CD8-positive, alpha-beta T cell (primary cell): ENCODE measurements at regions of chr12 and their contacts with region 1.

Region 1: GRCh38 chr12:100311317-100311716 is 44.3 kb downstream of the SCYL2 start:
- DNase-seq: no peak
- ATAC-seq: no peak
- H3K4me3 ChIP-seq: no peak overlapping the region
- H3K4me3 Mint-ChIP-seq: no peak overlapping the region
- H3K27ac ChIP-seq: no peak overlapping the region
- H3K27ac Mint-ChIP-seq: no peak overlapping the region
- H3K4me1 ChIP-seq: no peaks in the 10 kb centered on the region
- H3K4me1 Mint-ChIP-seq: peaks cover 3% of the 10 kb centered on the region
- H3K27me3 ChIP-seq: no peaks in the 10 kb centered on the region
- H3K27me3 Mint-ChIP-seq: no peaks in the 10 kb centered on the region
- CTCF ChIP-seq: no peak

Region 2: GRCh38 chr12:100058482-100059029 is 252.8 kb before region 1 on chr12:
- CTCF ChIA-PET with region 1: no interaction called
- POLR2A ChIA-PET with region 1: no interaction called
- intact Hi-C with region 1: loop called in 1 of 2 experiments (anchors 10 kb)
- DNase-seq: no peak
- ATAC-seq: no peak
- H3K4me3 ChIP-seq: no peak overlapping the region
- H3K4me3 Mint-ChIP-seq: no peak overlapping the region
- H3K27ac ChIP-seq: no peak overlapping the region
- H3K27ac Mint-ChIP-seq: no peak overlapping the region
- H3K4me1 ChIP-seq: no peaks in the 10 kb centered on the region
- H3K4me1 Mint-ChIP-seq: no peaks in the 10 kb centered on the region
- H3K27me3 ChIP-seq: no peaks in the 10 kb centered on the region
- H3K27me3 Mint-ChIP-seq: no peaks in the 10 kb centered on the region
- CTCF ChIP-seq: no peak

Region 3: DNA sequence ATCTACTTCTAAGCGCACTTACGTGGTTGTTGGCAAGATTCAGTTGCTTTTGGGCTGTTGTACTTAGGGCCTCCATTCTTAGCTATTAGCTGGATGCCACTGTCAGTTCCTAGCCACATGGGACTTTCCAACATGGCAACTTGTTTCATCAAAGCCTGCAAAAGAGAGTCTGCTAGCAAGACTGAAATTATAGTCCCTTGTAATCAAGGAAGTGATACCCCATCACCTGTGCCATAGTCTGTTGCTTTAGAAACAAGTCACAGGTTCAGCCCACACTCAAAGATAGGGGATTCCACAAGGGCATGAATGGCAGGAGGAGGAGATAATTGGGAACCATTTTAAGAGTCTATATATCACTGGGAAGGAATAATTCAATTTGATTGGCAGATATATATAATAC is 18.5 kb after region 1 on chr12:
- CTCF ChIA-PET with region 1: no interaction called
- POLR2A ChIA-PET with region 1: no interaction called
- intact Hi-C with region 1: loop called in 1 of 2 experiments (anchors 1 kb)
- DNase-seq: peak in 1 of 9 experiments; percentile 6
- ATAC-seq: no peak
- H3K4me3 ChIP-seq: no peak overlapping the region
- H3K4me3 Mint-ChIP-seq: no peak overlapping the region
- H3K27ac ChIP-seq: no peak overlapping the region
- H3K27ac Mint-ChIP-seq: no peak overlapping the region
- H3K4me1 ChIP-seq: no peaks in the 10 kb centered on the region
- H3K4me1 Mint-ChIP-seq: no peaks in the 10 kb centered on the region
- H3K27me3 ChIP-seq: no peaks in the 10 kb centered on the region
- H3K27me3 Mint-ChIP-seq: no peaks in the 10 kb centered on the region
- CTCF ChIP-seq: no peak

Region 4: GRCh38 chr12:100624571-100624970 is 313.3 kb after region 1 on chr12:
- CTCF ChIA-PET with region 1: no interaction called
- POLR2A ChIA-PET with region 1: no interaction called
- intact Hi-C with region 1: no loop called
- DNase-seq: no peak
- ATAC-seq: no peak
- H3K4me3 ChIP-seq: no peak overlapping the region
- H3K4me3 Mint-ChIP-seq: no peak overlapping the region
- H3K27ac ChIP-seq: no peak overlapping the region
- H3K27ac Mint-ChIP-seq: no peak overlapping the region
- H3K4me1 ChIP-seq: no peaks in the 10 kb centered on the region
- H3K4me1 Mint-ChIP-seq: no peaks in the 10 kb centered on the region
- H3K27me3 ChIP-seq: no peaks in the 10 kb centered on the region
- H3K27me3 Mint-ChIP-seq: no peaks in the 10 kb centered on the region
- CTCF ChIP-seq: no peak